AG04449 (cell line): ENCODE measurements at regions of chr4 and their contacts with region 1.

Region 1: GRCh38 chr4:87697272-87697671 is 47.2 kb downstream of the DMP1 start:
- DNase-seq: no peak
- H3K4me3 ChIP-seq: no peak overlapping the region
- CTCF ChIP-seq: no peak

Region 2: GRCh38 chr4:87679449-87680169 is 17.7 kb before region 1 on chr4:
- CTCF ChIA-PET with region 1: interaction called, 25 read pairs
- POLR2A ChIA-PET with region 1: no interaction called
- DNase-seq: no peak
- H3K4me3 ChIP-seq: no peak overlapping the region
- CTCF ChIP-seq: peak; percentile 62

Region 3: GRCh38 chr4:87949961-87950360 is 252.7 kb after region 1 on chr4:
- CTCF ChIA-PET with region 1: no interaction called
- POLR2A ChIA-PET with region 1: no interaction called
- DNase-seq: no peak
- H3K4me3 ChIP-seq: no peak overlapping the region
- CTCF ChIP-seq: no peak